ENCODE measurements at regions of chr15 and their contacts with region 1.

Region 1: GRCh38 chr15:85024509-85025214 is 43.0 kb downstream of the PDE8A start:
- DNase-seq: no peak
- ATAC-seq: no peak
- H3K4me3 ChIP-seq: no peak overlapping the region
- H3K27ac ChIP-seq: no peak overlapping the region
- H3K4me1 ChIP-seq: peaks cover 26% of the 10 kb centered on the region in 2 donors
- H3K27me3 ChIP-seq: no peaks in the 10 kb centered on the region
- CTCF ChIP-seq: no peak
- POLR2A ChIP-seq: no peak

Region 2: GRCh38 chr15:84961114-84961452 is 63.6 kb before region 1 on chr15:
- in situ Hi-C with region 1: loop called in 1 of 4 experiments (anchors 10 kb)
- intact Hi-C with region 1: no loop called
- DNase-seq: no peak
- ATAC-seq: no peak
- H3K4me3 ChIP-seq: no peak overlapping the region
- H3K27ac ChIP-seq: no peak overlapping the region
- H3K4me1 ChIP-seq: no peaks in the 10 kb centered on the region
- H3K27me3 ChIP-seq: no peaks in the 10 kb centered on the region
- CTCF ChIP-seq: no peak
- POLR2A ChIP-seq: no peak

Region 3: GRCh38 chr15:84981054-84981710 is 43.5 kb before region 1 on chr15:
- in situ Hi-C with region 1: no loop called
- intact Hi-C with region 1: loop called (anchors 5 kb)
- DNase-seq: peak; percentile 88 to 94
- ATAC-seq: peak; percentile 74 to 85
- H3K4me3 ChIP-seq: peak overlapping the region; percentile 80 to 94 (median 91)
- H3K27ac ChIP-seq: peak overlapping the region; percentile 96 to 97 (median 96)
- H3K4me1 ChIP-seq: peaks cover 27 to 29% of the 10 kb centered on the region in 2 donors
- H3K27me3 ChIP-seq: no peaks in the 10 kb centered on the region
- CTCF ChIP-seq: peak in 4 of 5 experiments; percentile 9 to 44 (median 40)
- POLR2A ChIP-seq: peak in 1 of 2 donors; percentile 61

Measured in gastrocnemius medialis (tissue), 4 donors.